T-cell (primary cell): ENCODE measurements at regions of chr15 and their contacts with region 1.

Region 1: GRCh38 chr15:31200735-31201151 is 99.2 kb upstream of the TRPM1 start:
- DNase-seq: peak; percentile 35 to 79 (median 65)
- ATAC-seq: peak; percentile 73 to 83 (median 78)
- H3K4me3 ChIP-seq: no peak overlapping the region
- H3K4me3 Mint-ChIP-seq: no peak overlapping the region
- H3K27ac ChIP-seq: no peak overlapping the region
- H3K27ac Mint-ChIP-seq: peak overlapping the region; percentile 28 to 49
- H3K4me1 ChIP-seq: peaks cover 8 to 35% of the 10 kb centered on the region in 2 experiments
- H3K4me1 Mint-ChIP-seq: peaks cover 22 to 33% (median 27%) of the 10 kb centered on the region in 3 donors
- H3K27me3 ChIP-seq: peaks cover 0 to 3% of the 10 kb centered on the region in 2 experiments
- H3K27me3 Mint-ChIP-seq: no peaks in the 10 kb centered on the region

Region 2: GRCh38 chr15:31488426-31489204 is 287.9 kb after region 1 on chr15:
- CTCF ChIA-PET with region 1: interaction called, 18 to 44 read pairs
- POLR2A ChIA-PET with region 1: no interaction called
- DNase-seq: peak in 20 of 35 experiments; percentile 19 to 89 (median 30)
- ATAC-seq: peak; percentile 31 to 59 (median 35)
- H3K4me3 ChIP-seq: no peak overlapping the region
- H3K4me3 Mint-ChIP-seq: no peak overlapping the region
- H3K27ac ChIP-seq: no peak overlapping the region
- H3K27ac Mint-ChIP-seq: peak overlapping the region; percentile 28 to 32
- H3K4me1 ChIP-seq: peaks cover 7 to 35% of the 10 kb centered on the region in 2 experiments
- H3K4me1 Mint-ChIP-seq: peaks cover 23 to 47% (median 37%) of the 10 kb centered on the region in 3 donors
- H3K27me3 ChIP-seq: peaks cover 0 to 6% of the 10 kb centered on the region in 2 experiments
- H3K27me3 Mint-ChIP-seq: peaks cover 0 to 5% of the 10 kb centered on the region in 2 donors